Panc1 (cell line): ENCODE measurements at regions of chr6 and their contacts with region 1.

Region 1: DNA sequence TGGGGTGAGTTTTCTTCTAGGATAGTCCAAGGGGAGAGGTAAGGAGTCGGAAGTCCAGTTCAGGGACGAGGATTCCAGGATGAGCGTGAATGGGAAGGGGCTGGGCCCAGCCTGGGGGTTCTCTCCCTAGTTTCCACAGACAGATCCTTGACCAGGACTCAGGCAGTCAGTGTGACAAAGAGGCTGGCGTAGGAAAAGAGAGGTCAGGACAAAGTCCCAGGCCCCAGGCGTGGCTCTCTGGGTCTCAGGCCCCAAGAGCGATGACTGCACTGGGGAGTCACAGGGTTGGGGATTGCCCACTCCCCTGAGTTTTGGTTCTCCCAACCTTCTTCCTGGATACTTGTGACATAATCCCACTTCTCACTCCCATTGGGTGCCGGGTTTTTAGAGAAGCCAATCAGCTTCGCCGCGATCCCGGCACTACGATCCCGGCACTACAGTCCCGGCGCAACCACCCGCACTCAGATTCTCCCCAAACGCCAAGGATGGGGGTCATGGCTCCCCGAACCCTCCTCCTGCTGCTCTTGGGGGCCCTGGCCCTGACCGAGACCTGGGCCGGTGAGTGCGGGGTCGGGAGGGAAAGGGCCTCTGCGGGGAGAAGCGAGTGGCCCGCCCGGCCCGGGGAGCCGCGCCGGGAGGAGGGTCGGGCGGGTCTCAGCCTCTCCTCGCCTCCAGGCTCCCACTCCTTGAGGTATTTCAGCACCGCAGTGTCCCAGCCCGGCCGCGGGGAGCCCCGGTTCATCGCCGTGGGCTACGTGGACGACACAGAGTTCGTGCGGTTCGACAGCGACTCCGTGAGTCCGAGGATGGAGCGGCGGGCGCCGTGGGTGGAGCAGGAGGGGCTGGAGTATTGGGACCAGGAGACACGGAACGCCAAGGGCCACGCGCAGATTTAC is 46.2 kb upstream of the TRIM26 start:
- DNase-seq: peak; percentile 64
- ATAC-seq: peak; percentile 97
- H3K4me3 ChIP-seq: peak overlapping the region; percentile 81 to 91
- H3K27ac ChIP-seq: peak overlapping the region; percentile 72
- H3K4me1 ChIP-seq: peaks cover 4% of the 10 kb centered on the region; the same call in 1 of the 2 replicates
- H3K27me3 ChIP-seq: no peaks in the 10 kb centered on the region
- CTCF ChIP-seq: peak; percentile 62

Region 2: DNA sequence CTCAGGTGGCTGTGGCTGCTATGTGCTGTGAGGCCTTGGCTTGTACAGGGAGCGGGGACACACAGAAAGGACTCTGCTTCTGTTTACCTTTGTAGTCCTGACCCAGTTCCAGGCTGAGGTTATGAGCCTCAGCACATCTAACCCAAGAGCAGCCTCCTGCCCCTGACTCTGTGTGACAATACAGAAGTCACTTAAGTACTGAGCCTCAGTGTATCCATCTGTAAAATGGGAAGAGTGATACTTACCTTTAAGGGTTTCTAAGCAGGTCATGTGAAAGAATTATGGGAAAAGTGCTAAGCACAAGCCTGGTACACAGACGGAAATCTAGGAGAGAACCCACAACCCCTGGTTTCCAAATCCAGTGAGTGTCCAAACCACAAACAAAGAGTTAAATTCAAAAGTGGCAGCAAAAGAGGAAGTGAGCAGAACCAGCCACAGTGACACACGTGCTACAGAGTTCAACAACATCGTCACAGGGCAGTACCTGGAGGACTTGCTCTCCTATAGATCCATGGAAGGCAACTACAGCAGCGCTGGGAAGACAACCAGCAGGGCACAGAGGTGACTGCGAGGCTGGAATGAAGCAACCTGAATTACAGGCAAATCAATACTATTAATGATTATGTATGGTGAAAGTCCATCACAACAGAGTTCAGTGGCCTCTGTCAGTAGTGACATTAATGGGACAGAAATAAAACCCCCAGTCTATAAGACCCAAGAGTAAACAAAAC is 58.7 kb before region 1 on chr6:
- CTCF ChIA-PET with region 1: no interaction called
- POLR2A ChIA-PET with region 1: no interaction called
- in situ Hi-C with region 1: no loop called
- intact Hi-C with region 1: no loop called
- DNase-seq: no peak
- ATAC-seq: no peak
- H3K4me3 ChIP-seq: no peak overlapping the region
- H3K27ac ChIP-seq: no peak overlapping the region
- H3K4me1 ChIP-seq: no peaks in the 10 kb centered on the region
- H3K27me3 ChIP-seq: no peaks in the 10 kb centered on the region
- CTCF ChIP-seq: no peak

Region 3: GRCh38 chr6:30212865-30213666 is 46.3 kb before region 1 on chr6 and contains the start of gene TRIM26:
- CTCF ChIA-PET with region 1: interaction called, 12 read pairs
- POLR2A ChIA-PET with region 1: interaction called, 3 read pairs
- in situ Hi-C with region 1: no loop called
- intact Hi-C with region 1: no loop called
- DNase-seq: peak; percentile 86
- ATAC-seq: peak; percentile 94
- H3K4me3 ChIP-seq: peak within 1 kb of the TSS; percentile 80 to 95
- H3K27ac ChIP-seq: peak within 1 kb of the TSS; percentile 98
- H3K4me1 ChIP-seq: peaks cover 26% of the 10 kb centered on the region
- H3K27me3 ChIP-seq: no peaks in the 10 kb centered on the region
- CTCF ChIP-seq: no peak
- total RNA-seq, gene TRIM26: 44.8 TPM

Region 4: DNA sequence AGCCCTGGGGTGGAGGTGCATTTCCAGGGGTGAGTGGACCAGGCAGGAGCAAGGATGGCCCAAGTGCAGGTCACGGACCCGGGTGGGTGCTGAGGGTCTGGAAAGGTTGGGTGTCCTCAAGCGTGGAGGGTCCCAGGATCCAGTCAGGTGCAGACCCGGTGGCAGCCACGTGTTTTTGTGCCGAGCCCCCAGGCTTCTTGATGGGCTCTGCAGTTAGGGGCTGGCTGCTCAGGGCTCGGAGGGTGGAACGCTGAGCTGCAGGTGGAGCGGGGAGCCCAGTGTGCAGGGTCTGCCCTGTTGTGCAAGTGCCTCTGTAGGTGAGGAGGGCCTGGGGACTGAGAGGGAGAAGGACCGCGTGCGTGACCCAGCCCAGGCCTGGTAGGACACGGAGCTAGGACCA is 159.1 kb after region 1 on chr6:
- CTCF ChIA-PET with region 1: no interaction called
- POLR2A ChIA-PET with region 1: no interaction called
- in situ Hi-C with region 1: no loop called
- intact Hi-C with region 1: no loop called
- DNase-seq: no peak
- ATAC-seq: no peak
- H3K4me3 ChIP-seq: no peak overlapping the region
- H3K27ac ChIP-seq: no peak overlapping the region
- H3K4me1 ChIP-seq: no peaks in the 10 kb centered on the region
- H3K27me3 ChIP-seq: no peaks in the 10 kb centered on the region; the same call in none of the 2 replicates
- CTCF ChIP-seq: no peak

Region 5: DNA sequence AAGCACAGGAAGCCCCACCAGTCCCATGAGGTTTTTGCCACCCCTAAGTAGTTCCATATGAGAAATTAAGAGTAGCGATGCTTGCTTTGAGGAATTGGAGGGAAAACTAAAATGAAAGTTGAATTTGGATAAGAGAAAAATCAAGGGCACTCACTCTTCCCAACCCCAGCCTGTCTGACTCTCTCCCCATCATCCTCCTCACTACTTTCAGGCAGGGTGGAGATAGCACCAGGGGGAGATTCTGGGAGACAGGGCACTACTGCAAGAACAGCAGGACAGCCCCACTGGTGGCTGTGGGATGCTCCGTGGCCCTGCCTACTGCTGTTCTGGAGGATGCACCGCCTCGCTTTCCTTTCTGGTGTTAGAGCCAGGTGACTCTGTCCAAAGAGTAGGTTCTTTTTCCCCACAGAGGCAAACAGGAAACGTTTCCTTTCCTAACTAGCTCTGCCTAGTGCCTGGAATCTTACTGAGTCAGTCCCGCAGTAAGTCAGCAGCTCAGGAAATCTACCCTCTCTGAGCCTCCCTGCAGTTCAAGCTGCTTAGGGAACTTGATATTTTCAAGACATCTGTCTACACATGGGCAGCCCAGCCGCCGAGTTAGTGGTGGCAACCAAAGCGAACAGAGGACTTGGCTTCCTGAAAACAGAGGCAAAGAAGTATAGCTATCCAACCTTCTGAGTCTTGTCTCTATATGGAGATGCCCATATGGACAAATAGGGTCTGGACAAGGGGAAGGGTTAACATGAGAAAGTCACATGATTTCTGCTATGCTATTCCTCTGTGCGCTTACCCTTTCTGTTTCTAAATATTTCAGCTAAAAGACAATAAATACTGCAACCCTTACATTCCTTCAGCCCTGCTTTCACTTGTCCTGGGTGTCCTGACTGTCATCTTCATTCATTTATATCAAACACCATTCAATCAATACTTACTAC is 241.3 kb after region 1 on chr6:
- CTCF ChIA-PET with region 1: no interaction called
- POLR2A ChIA-PET with region 1: no interaction called
- in situ Hi-C with region 1: no loop called
- intact Hi-C with region 1: no loop called
- DNase-seq: no peak
- ATAC-seq: peak; percentile 80
- H3K4me3 ChIP-seq: no peak overlapping the region
- H3K27ac ChIP-seq: no peak overlapping the region
- H3K4me1 ChIP-seq: peaks cover 4% of the 10 kb centered on the region
- H3K27me3 ChIP-seq: no peaks in the 10 kb centered on the region
- CTCF ChIP-seq: no peak

Region 6: GRCh38 chr6:31525932-31526591 is 1266.7 kb after region 1 on chr6:
- CTCF ChIA-PET with region 1: no interaction called
- POLR2A ChIA-PET with region 1: no interaction called
- in situ Hi-C with region 1: no loop called
- intact Hi-C with region 1: no loop called
- DNase-seq: no peak
- ATAC-seq: no peak
- H3K4me3 ChIP-seq: no peak overlapping the region
- H3K27ac ChIP-seq: no peak overlapping the region
- H3K4me1 ChIP-seq: peaks cover 4% of the 10 kb centered on the region; the same call in 1 of the 2 replicates
- H3K27me3 ChIP-seq: no peaks in the 10 kb centered on the region
- CTCF ChIP-seq: no peak